Endothelial cell of umbilical vein (primary cell): ENCODE measurements at regions of chr9 and their contacts with region 1.

Region 1: DNA sequence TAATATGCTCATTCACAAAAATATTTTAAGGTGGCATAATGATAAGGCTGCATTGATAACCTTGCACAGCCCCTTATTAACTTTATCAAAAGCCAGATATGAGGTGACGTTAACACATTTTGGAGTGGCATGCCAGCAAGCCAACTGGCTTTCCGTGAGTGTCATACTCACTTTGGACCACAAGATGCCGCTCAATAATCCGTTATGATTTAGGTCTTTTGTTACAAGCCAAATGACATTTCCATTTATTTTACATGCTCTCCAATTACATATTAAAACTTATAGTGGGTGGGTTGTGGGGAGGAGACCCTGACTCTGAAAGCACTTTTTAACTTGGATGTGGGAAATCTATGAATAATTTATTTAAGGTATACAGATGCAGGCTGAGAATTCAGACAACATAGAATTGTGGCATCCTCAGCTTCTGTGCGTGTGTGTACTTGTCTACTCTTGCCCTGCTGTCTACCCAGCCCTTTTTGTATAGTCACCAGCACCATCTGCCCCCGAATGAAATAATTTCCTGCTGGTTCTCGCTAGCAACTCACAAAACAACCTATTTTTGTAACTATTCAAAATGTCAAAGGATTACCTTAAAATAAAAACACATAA is 305.1 kb downstream of the PSAT1 start:
- DNase-seq: peak; percentile 70
- H3K4me3 ChIP-seq: no peak overlapping the region
- H3K27ac ChIP-seq: no peak overlapping the region
- H3K4me1 ChIP-seq: peaks cover 10% of the 10 kb centered on the region
- H3K27me3 ChIP-seq: peaks cover 2 to 7% of the 10 kb centered on the region in 2 experiments
- CTCF ChIP-seq: peak; percentile 72 to 81
- POLR2A ChIP-seq: no peak

Region 2: DNA sequence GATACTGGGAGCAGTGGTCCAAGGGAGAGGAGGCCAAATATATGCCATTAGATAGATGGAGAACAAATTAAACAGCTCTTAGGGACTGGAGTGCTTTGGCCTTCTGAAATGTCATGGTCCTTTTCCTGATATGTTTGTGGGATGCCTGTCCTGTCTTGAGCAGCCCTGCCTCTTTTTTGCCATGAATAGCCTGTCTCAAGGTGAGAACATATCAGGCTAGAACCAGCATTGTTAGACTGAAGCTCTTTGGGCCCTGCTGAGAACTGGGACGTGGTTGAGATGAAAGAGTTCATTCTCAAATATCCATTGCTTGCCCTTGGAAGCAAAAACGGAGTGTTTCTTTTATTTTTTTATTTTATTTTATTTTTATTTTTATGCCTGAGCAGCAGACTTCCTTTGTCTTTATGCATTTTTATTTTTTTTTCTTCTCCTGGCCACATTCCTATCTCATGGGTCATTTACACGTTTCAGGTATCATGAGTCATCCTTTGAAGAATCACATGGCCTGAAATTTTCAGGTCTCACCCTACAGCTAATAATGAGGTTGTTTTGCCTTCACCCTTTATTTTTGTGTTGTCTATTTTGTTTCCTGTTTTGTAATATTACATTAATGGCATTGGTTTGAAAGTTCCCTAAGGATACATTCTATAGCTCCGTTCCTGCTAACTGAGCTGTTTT is 66.2 kb after region 1 on chr9:
- CTCF ChIA-PET with region 1: no interaction called
- POLR2A ChIA-PET with region 1: no interaction called
- dilution Hi-C with region 1: no loop called
- intact Hi-C with region 1: loop called (anchors 10 kb)
- DNase-seq: no peak
- H3K4me3 ChIP-seq: no peak overlapping the region
- H3K27ac ChIP-seq: no peak overlapping the region
- H3K4me1 ChIP-seq: no peaks in the 10 kb centered on the region
- H3K27me3 ChIP-seq: no peaks in the 10 kb centered on the region
- CTCF ChIP-seq: no peak
- POLR2A ChIP-seq: no peak

Region 3: DNA sequence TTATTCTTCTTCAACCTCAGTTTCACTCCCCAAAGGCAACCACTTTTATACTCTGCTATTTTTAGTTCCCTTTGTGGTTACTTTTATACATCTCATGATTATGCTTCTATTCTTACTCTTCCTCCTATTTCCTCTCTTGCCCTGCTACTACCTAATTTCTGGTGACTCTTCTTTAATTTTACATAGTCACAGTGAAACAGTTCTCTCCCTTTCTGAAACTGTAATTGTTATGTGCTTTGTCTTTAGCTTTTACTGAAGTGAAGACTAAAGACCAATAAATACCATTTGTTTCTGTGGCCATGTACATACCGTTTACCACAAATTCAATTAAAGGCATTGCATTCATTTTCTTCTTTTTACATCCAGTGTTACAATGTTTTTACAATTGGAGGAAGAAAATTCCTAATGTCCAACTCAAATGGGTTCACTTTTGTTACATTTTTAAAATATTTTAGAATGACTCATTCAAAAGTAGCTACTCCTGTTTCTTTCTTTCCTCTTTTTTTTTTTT is 105.5 kb after region 1 on chr9:
- CTCF ChIA-PET with region 1: interaction called, 5 read pairs
- POLR2A ChIA-PET with region 1: no interaction called
- dilution Hi-C with region 1: no loop called
- intact Hi-C with region 1: loop called (anchors 5 kb)
- DNase-seq: no peak
- H3K4me3 ChIP-seq: no peak overlapping the region
- H3K27ac ChIP-seq: no peak overlapping the region
- H3K4me1 ChIP-seq: no peaks in the 10 kb centered on the region
- H3K27me3 ChIP-seq: no peaks in the 10 kb centered on the region
- CTCF ChIP-seq: no peak
- POLR2A ChIP-seq: no peak

Region 4: DNA sequence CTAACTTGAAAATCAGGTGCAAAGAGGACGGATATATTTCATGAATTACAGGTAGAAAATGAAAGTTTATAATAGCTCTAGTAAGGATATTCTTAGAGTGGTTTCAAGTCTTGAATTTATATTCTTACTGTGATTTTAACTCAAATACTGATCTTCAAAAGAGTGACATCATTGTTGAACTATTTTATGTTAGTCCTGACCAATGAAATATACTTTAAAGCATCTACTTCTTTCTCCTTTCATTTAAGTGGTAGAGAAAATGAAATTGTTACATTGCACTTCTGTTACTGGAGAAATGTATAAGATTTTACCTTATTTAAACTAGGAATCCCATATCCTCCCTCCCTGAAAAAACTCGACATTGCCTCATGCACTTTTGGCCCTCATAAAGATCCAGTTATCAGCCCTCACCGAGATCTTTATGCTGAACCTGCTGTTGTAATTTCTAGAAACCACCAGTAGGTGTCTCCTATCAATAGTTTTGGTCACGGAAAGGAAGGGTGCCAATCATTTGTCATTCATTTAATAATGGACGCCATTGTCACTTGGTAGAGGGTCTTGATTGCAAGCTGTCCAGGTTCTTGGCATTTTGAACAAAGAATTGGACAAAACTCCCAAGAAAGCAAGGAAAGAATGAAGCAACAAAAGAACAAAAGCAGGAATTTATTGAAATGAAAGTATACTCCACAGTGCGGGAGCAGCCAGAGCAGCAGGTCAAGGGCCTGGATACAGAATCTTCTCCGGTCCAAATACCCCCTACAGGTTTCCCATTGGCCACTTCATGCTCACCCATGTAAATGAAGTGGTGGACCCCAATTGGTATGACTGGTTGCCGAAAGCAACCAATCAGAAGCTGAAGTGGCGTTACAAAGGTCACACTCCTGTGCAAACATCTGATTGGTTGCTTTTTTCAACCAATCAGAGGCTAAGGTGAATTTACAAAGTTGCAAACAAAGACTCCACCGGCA is 219.1 kb after region 1 on chr9:
- CTCF ChIA-PET with region 1: interaction called, 3 read pairs
- POLR2A ChIA-PET with region 1: no interaction called
- dilution Hi-C with region 1: no loop called
- intact Hi-C with region 1: loop called (anchors 1 kb)
- DNase-seq: peak; percentile 55
- H3K4me3 ChIP-seq: peak overlapping the region in 1 of 3 experiments; percentile 34
- H3K27ac ChIP-seq: peak overlapping the region; percentile 14
- H3K4me1 ChIP-seq: no peaks in the 10 kb centered on the region
- H3K27me3 ChIP-seq: no peaks in the 10 kb centered on the region
- CTCF ChIP-seq: peak; percentile 49 to 52
- POLR2A ChIP-seq: no peak

Region 5: DNA sequence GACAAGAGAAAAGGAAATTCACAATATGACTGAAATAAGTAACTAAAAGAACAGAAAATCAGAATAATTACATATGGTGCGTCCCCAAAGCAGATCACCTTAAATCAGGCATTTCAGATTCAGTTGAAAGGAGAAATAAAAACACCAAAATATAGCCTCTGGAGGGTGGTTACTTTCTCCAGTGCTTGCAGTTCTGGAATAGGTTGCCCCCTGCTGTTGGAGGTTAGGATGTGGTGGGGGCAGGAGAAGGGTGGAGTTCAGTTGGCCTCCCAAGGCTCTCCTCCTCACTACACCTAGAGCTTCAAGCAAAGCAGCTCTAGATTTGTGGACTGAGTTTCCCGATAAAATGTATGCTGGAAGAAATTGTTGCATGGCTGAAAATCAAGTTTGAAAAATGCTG is 631.5 kb after region 1 on chr9:
- CTCF ChIA-PET with region 1: interaction called, 17 read pairs
- POLR2A ChIA-PET with region 1: no interaction called
- dilution Hi-C with region 1: no loop called
- intact Hi-C with region 1: loop called (anchors 1 kb)
- DNase-seq: peak; percentile 34
- H3K4me3 ChIP-seq: no peak overlapping the region
- H3K27ac ChIP-seq: no peak overlapping the region
- H3K4me1 ChIP-seq: no peaks in the 10 kb centered on the region
- H3K27me3 ChIP-seq: peaks cover 0 to 3% of the 10 kb centered on the region in 2 experiments
- CTCF ChIP-seq: peak; percentile 42 to 54
- POLR2A ChIP-seq: no peak

Region 6: DNA sequence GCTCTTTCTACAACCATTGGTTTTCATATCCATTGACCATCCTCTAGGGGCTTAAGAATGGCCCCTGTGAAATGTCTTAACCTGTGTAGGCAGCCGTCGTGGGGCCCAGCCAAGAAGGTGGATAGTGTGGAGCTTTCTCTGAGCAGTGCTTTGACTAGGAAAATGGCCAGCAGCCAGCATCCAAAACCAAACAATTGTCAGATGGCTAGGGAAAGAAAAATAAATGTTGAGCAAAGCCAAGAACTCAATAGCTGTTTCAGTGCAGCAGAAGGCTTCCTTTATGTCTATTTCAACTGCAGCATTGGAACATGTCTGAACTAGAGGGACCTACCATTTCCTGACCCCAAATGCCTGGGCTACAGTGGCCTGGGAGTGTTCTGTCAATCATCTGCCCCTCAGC is 1344.7 kb after region 1 on chr9:
- CTCF ChIA-PET with region 1: no interaction called
- POLR2A ChIA-PET with region 1: no interaction called
- dilution Hi-C with region 1: no loop called
- intact Hi-C with region 1: loop called (anchors 10 kb)
- DNase-seq: peak; percentile 45
- H3K4me3 ChIP-seq: no peak overlapping the region
- H3K27ac ChIP-seq: no peak overlapping the region
- H3K4me1 ChIP-seq: peaks cover 6% of the 10 kb centered on the region
- H3K27me3 ChIP-seq: no peaks in the 10 kb centered on the region
- CTCF ChIP-seq: no peak
- POLR2A ChIP-seq: no peak